ENCODE measurements at regions of chr1 and their contacts with region 1.

Region 1: DNA sequence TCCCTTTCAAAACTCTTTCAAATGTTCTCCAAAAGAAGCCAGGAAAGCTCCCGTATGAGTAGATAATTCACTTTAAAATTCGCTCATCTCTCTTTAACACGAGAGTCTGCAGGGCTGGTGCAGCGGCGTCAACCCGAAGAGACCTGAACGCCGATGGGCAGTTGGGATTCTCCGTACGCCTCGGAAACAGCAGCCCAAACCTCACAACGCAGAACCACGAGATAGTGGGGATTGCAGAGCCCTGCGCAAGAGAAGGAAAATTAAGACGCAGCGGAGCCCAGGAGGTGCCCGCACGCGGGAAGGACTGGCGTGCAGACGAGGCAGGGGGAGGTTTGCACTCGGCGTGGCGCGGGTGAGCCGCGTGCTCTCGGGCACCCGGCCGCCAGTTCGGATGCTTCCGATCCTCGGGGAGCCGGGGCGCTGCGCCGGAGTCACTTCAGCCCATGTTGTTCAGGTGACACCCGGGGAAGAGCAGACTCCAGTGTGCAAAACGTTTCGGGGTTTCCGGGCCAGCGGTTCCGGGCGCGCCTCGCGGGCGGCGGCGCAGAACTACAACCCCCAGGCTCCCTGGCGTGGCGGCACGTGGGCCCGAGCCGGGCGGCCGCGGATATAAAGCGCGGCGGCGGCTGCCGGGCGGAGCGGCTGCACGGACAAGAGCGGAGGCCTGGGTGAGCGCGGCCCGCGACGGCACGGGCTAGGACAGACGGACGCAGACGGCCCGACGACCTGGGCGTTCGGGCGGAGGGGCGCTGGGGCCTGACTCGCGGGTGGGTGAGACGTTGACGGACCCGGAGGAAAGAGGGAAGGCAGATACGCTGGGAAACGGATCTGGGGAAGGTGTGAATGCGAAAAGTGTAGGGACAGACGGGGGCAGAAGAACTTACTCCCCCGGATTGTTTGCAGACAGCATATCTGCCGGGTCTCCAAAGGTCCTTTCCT is at the start of gene NPL:
- DNase-seq: no peak
- H3K4me3 ChIP-seq: peak within 1 kb of the TSS; percentile 68
- CTCF ChIP-seq: no peak

Region 2: GRCh38 chr1:182446033-182446669 is 343.3 kb before region 1 on chr1:
- CTCF ChIA-PET with region 1: interaction called, 26 read pairs
- POLR2A ChIA-PET with region 1: no interaction called
- DNase-seq: peak; percentile 0
- H3K4me3 ChIP-seq: no peak overlapping the region; the same call in 1 of the 2 replicates
- CTCF ChIP-seq: peak; percentile 56

Region 3: GRCh38 chr1:182771187-182771984 is 18.0 kb before region 1 on chr1:
- CTCF ChIA-PET with region 1: interaction called, 12 read pairs
- POLR2A ChIA-PET with region 1: no interaction called
- DNase-seq: no peak
- H3K4me3 ChIP-seq: no peak overlapping the region
- CTCF ChIP-seq: no peak